ENCODE measurements at regions of chr22 and their contacts with region 1.

Region 1: GRCh38 chr22:32265882-32266767 is 11.0 kb upstream of the SLC5A4 start:
- DNase-seq: peak; percentile 3
- H3K4me3 ChIP-seq: no peak overlapping the region
- CTCF ChIP-seq: peak; percentile 79

Region 2: GRCh38 chr22:31977141-31977841 is 288.8 kb before region 1 on chr22:
- CTCF ChIA-PET with region 1: interaction called, 104 read pairs
- POLR2A ChIA-PET with region 1: no interaction called
- DNase-seq: no peak
- H3K4me3 ChIP-seq: no peak overlapping the region
- CTCF ChIP-seq: peak; percentile 81

Region 3: DNA sequence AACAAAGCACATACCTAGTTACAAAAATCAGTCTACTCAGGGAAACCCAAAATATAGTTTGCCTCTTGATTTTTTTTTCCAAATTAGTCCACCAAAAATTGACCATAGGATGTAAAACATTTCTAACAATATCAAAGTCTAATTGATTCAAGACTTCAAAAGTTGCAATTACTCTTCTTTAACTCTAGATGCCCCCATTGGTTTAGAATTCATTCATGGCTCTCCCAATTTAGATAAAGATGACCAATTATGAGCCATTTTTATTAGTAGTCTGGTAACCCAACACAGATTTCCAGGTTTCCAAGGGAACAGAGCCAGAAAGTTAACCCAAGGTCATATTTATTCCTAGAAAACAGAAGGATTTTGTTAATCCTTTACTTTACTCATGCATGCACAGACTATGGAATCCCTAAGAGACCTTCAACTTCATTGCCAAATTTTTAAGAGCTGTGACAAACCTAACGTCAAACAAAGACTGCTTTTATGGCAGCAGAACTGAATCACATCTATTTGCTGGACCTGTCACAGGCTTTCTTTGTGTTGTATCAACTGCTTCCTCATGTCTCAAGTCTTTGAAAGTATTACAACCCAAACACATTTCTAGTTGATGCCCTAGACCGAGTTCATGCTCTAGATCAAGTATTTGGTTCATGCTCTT is 162.3 kb before region 1 on chr22:
- CTCF ChIA-PET with region 1: interaction called, 13 read pairs
- POLR2A ChIA-PET with region 1: no interaction called
- DNase-seq: no peak
- H3K4me3 ChIP-seq: no peak overlapping the region
- CTCF ChIP-seq: no peak

Region 4: GRCh38 chr22:32255726-32256125 is 10.4 kb before region 1 on chr22:
- CTCF ChIA-PET with region 1: interaction called, 10 read pairs
- POLR2A ChIA-PET with region 1: no interaction called
- DNase-seq: no peak
- H3K4me3 ChIP-seq: no peak overlapping the region
- CTCF ChIP-seq: no peak

Region 5: GRCh38 chr22:32281072-32281471 is 14.9 kb after region 1 on chr22:
- CTCF ChIA-PET with region 1: interaction called, 13 read pairs
- POLR2A ChIA-PET with region 1: no interaction called
- DNase-seq: no peak
- H3K4me3 ChIP-seq: no peak overlapping the region
- CTCF ChIP-seq: no peak

Measured in AG04449 (cell line).